ENCODE measurements at regions of chr6 and their contacts with region 1.

Region 1: DNA sequence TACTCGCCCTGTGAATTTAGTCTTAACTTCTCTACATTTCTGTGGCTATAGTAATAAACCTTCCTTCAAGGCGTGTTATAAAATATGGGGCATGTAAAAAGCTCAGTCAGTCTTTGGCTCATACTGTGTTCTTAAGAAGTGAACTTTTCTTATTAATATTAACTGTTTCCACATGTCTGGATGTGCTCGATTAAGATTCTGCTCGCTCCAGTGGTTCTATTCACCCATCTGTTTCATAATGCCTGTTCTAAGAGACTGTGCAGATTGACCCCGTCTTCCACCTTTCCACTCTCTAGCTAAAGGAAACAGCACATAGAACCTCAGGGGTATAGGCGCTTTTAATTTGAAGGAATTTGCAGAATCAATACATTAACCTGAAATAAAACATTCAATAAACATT is 99.9 kb downstream of the L3MBTL3 start:
- DNase-seq: no peak
- CTCF ChIP-seq: no peak

Region 2: DNA sequence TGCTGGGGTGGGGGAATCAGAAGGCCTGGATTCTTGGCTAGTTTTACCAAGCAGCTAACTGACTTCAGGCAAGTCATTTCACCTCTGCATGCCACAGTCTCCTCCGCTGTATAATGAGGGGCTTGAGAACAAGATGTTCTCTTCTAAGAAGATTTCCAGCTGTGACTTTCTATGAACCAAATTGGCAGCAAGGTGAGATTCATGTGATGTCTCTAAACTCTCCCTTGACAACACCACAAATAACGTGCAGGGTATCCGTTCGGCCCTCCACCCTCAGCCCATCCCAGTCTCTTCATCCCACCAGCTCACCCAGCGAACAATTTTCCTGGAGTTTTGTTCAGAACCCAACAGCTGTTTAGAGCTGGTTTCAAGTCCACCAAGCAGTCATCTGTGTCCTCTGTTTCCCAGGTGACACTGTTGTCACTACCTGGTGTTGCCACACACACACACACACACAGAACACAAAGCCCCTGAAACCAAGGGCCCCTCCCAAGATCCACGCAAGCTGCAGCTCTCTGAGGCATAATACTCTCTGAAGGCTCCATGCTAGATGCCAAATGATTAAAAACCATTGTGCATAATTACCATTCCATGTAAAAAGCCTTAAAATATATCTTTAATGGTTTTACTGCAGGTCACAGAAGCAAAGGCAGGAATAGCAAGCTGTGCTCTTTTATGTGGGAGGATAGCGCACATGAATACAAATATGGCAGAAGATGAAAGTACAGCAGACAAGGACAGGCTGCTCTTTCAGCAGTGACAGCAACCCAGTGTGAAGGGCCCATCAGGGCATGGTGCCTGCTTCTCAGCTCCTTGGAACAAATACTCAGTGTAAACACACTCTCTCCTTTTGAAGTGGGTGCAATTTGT is 456.5 kb before region 1 on chr6:
- CTCF ChIA-PET with region 1: no interaction called
- POLR2A ChIA-PET with region 1: interaction called, 11 read pairs
- DNase-seq: no peak
- CTCF ChIP-seq: no peak

Region 3: DNA sequence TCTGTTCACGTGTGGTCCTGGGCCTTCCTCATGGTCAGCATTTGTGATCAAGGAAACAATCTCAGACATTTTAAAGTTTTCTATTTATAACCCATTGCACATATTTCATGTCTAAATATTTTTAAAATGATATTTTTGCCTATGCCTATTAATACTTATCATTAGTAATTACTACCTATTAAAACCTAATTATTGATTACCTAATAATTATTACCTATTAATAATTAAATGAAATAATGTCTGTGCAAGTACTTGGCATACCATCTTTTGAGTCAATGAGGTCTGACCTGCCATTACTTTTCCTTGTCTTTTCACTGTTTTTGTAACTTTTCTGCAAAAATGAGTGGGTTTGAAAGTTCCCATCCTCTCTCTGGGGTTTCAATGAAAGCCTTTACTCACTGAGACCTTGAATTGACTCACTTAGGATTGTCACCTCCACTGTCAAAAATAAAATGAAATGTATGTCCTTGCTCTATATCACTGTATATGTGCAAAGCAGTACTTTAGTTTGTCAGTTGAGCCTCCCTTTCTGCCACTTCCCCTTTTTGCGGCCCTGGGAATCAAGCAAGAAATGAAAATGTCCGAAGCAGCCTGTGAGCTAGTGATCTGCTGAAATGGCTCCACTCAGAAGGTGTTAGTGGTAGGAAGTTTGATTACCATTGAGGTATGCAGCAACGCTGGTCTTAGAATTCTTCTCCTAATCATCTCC is 12.1 kb before region 1 on chr6:
- CTCF ChIA-PET with region 1: interaction called, 14 read pairs
- POLR2A ChIA-PET with region 1: no interaction called
- DNase-seq: peak; percentile 28
- CTCF ChIP-seq: no peak

Measured in GM10248 (cell line).